Activated naive CD4-positive, alpha-beta T cell treated with anti-CD3 and anti-CD28 coated beads, Interleukin-2, amount 10 ng/mL, durations not matched to agents 7 days and 5 days (primary cell): ENCODE measurements at regions of chr12 and their contacts with region 1.

Region 1: GRCh38 chr12:49515266-49515665 is 23.6 kb upstream of the KCNH3 start:
- DNase-seq: no peak
- H3K4me3 Mint-ChIP-seq: no peak overlapping the region
- H3K27ac Mint-ChIP-seq: no peak overlapping the region
- H3K4me1 Mint-ChIP-seq: no peaks in the 10 kb centered on the region
- H3K27me3 Mint-ChIP-seq: no peaks in the 10 kb centered on the region

Region 2: GRCh38 chr12:49366652-49367380 is 148.4 kb before region 1 on chr12:
- CTCF ChIA-PET with region 1: interaction called, 309 read pairs
- DNase-seq: peak; percentile 93
- H3K4me3 Mint-ChIP-seq: peak overlapping the region; percentile 93
- H3K27ac Mint-ChIP-seq: peak overlapping the region; percentile 94
- H3K4me1 Mint-ChIP-seq: peaks cover 38% of the 10 kb centered on the region
- H3K27me3 Mint-ChIP-seq: peaks cover 13% of the 10 kb centered on the region

Region 3: GRCh38 chr12:49503674-49504180 is 11.5 kb before region 1 on chr12:
- CTCF ChIA-PET with region 1: interaction called, 13 read pairs
- DNase-seq: no peak
- H3K4me3 Mint-ChIP-seq: no peak overlapping the region
- H3K27ac Mint-ChIP-seq: no peak overlapping the region
- H3K4me1 Mint-ChIP-seq: peaks cover 11% of the 10 kb centered on the region
- H3K27me3 Mint-ChIP-seq: no peaks in the 10 kb centered on the region

Region 4: GRCh38 chr12:49527361-49528130 is 12.3 kb after region 1 on chr12:
- CTCF ChIA-PET with region 1: interaction called, 24 read pairs
- DNase-seq: no peak
- H3K4me3 Mint-ChIP-seq: no peak overlapping the region
- H3K27ac Mint-ChIP-seq: no peak overlapping the region
- H3K4me1 Mint-ChIP-seq: no peaks in the 10 kb centered on the region
- H3K27me3 Mint-ChIP-seq: peaks cover 5% of the 10 kb centered on the region